PC-9 (cell line): ENCODE measurements at regions of chr13 and their contacts with region 1.

Region 1: GRCh38 chr13:80132741-80133601 is 208.0 kb downstream of the SPRY2 start:
- DNase-seq: peak; percentile 36 to 81
- H3K4me3 ChIP-seq: peak overlapping the region; percentile 46
- H3K27ac ChIP-seq: peak overlapping the region; percentile 47
- H3K4me1 ChIP-seq: peaks cover 35% of the 10 kb centered on the region
- H3K27me3 ChIP-seq: no peaks in the 10 kb centered on the region
- CTCF ChIP-seq: no peak

Region 2: DNA sequence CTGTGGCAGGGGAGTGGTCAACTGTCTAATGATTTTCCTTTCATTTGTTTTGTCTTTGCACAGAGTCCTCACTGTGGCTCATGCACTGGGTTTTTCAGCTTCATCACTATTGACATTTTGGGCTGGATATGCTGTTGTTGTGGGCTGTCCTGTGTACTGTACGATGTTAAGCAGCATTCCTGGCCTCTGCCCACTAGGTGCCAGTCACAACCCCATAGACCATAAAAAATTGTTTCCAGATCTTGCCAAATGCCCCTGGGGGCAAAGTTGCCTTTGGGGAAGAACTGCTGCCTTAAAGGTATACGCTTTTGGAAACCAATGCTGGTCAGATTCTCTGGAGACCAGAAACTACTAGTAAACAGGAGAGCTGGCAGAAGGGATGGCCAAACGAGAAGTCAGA is 102.5 kb before region 1 on chr13:
- CTCF ChIA-PET with region 1: no interaction called
- POLR2A ChIA-PET with region 1: interaction called, 4 read pairs
- intact Hi-C with region 1: loop called (anchors 1 kb)
- DNase-seq: peak; percentile 77 to 80
- H3K4me3 ChIP-seq: no peak overlapping the region
- H3K27ac ChIP-seq: no peak overlapping the region
- H3K4me1 ChIP-seq: peaks cover 10% of the 10 kb centered on the region
- H3K27me3 ChIP-seq: no peaks in the 10 kb centered on the region
- CTCF ChIP-seq: peak; percentile 58

Region 3: DNA sequence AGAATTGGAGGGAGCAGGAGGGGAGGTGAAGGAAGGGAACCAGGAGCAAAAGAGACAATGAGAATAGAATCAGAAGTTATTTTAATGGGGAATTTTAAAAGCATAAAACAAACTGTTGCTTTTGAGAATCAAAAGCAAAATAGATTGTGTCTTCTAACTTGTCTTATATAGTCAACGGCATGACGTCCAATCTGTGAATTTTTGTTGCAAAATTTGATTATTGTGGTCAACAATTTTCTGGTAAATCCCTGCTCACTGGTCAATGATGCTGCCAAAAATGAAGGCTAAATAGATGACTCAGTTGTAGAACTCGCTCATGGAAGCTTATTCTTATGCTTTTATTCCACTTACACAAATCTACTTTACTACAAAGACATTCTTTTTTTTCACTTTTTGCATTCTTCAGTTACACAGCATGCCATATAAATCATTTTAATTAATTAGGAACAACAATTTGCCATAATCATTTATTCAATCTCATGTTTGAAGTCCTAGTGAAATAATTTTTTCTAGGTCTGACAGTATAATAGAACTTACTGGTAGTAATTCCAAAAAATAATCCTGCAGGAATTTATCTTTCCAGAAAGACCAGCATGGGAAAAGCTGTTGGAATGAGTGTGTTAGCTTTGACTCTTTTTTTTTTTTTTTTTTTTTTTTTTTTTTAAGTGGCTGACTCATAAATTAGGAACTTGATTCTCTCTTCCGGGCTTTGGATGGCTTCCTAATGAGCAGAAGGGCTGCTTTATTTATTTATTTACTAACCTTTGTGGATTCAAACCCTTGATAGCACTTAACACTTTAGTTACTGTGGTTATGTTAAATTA is 48.9 kb before region 1 on chr13:
- CTCF ChIA-PET with region 1: no interaction called
- POLR2A ChIA-PET with region 1: no interaction called
- intact Hi-C with region 1: loop called (anchors 1 kb)
- DNase-seq: peak in 1 of 2 experiments; percentile 82
- H3K4me3 ChIP-seq: no peak overlapping the region
- H3K27ac ChIP-seq: peak overlapping the region; percentile 43; the same call in 1 of the 2 replicates
- H3K4me1 ChIP-seq: peaks cover 53% of the 10 kb centered on the region
- H3K27me3 ChIP-seq: no peaks in the 10 kb centered on the region
- CTCF ChIP-seq: no peak

Region 4: DNA sequence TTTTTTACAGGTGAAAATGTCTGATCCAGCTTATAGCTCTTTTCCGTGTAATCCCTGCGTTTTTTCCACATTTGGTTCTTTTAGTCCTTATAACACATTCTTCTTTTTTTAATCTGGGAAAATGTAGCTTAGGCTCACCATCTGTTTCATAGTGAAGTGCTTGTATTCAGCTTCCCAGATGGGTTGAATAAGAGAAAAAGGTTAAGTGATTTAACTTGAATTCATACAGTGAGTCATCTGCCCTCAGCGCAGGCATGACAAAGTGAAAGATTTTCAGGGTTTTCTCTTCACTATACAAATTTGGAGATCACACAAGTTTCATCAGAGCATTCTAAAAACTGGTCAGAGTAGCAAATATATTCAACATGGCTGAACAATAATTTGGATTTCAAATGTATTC is 16.9 kb before region 1 on chr13:
- CTCF ChIA-PET with region 1: no interaction called
- POLR2A ChIA-PET with region 1: no interaction called
- intact Hi-C with region 1: no loop called
- DNase-seq: no peak
- H3K4me3 ChIP-seq: no peak overlapping the region
- H3K27ac ChIP-seq: no peak overlapping the region
- H3K4me1 ChIP-seq: no peaks in the 10 kb centered on the region
- H3K27me3 ChIP-seq: no peaks in the 10 kb centered on the region
- CTCF ChIP-seq: no peak

Region 5: GRCh38 chr13:80224468-80224867 is 91.5 kb after region 1 on chr13:
- CTCF ChIA-PET with region 1: interaction called, 10 read pairs
- POLR2A ChIA-PET with region 1: no interaction called
- intact Hi-C with region 1: no loop called
- DNase-seq: peak in 1 of 2 experiments; percentile 60
- H3K4me3 ChIP-seq: no peak overlapping the region
- H3K27ac ChIP-seq: no peak overlapping the region
- H3K4me1 ChIP-seq: no peaks in the 10 kb centered on the region
- H3K27me3 ChIP-seq: no peaks in the 10 kb centered on the region
- CTCF ChIP-seq: no peak

Region 6: DNA sequence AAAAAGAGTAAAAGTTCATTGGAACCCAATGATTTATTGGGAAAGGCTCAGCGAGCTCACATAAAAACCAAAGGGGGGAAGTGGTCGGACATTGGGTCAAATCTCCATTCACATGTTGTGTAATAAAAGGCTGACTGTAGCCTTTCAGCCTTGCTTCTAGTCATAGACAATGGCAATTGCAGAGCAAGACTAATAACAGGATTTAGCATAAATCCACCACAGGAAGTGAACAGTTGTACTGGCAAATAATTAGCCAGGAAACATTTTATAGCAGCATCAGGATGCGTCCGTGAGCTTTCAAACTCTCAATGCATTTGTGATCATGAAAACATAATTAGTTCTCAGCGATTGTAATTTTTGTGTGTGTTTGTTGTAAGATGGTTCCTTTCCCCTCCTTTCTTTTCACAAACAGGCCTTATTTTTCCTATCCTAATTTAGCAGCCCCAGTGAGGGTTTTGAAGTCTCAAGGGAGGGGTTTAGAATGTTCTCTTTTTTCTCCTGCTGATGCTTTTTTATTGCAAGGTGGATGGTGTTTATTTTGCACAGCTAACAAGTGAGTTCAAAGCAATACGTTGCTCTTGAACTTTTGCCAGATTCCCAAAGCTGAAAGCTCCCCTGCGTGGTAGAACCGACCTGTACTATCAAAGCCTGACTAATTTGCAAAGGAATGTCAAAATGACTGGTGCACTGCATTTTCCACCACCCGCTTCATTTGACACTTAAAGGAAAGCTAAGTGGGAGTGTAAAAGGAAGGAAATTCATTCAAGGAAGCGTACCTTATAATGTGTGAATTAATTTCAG is 102.4 kb after region 1 on chr13:
- CTCF ChIA-PET with region 1: no interaction called
- POLR2A ChIA-PET with region 1: no interaction called
- intact Hi-C with region 1: loop called (anchors 5 kb)
- DNase-seq: peak; percentile 15 to 74
- H3K4me3 ChIP-seq: no peak overlapping the region
- H3K27ac ChIP-seq: 0 out of 2 replicates have a peak overlapping the region, but pooled peaks have one; percentile 18
- H3K4me1 ChIP-seq: peaks cover 39% of the 10 kb centered on the region
- H3K27me3 ChIP-seq: no peaks in the 10 kb centered on the region
- CTCF ChIP-seq: no peak